Naive thymus-derived CD4-positive, alpha-beta T cell (primary cell): ENCODE measurements at regions of chr13 and their contacts with region 1.

Region 1: DNA sequence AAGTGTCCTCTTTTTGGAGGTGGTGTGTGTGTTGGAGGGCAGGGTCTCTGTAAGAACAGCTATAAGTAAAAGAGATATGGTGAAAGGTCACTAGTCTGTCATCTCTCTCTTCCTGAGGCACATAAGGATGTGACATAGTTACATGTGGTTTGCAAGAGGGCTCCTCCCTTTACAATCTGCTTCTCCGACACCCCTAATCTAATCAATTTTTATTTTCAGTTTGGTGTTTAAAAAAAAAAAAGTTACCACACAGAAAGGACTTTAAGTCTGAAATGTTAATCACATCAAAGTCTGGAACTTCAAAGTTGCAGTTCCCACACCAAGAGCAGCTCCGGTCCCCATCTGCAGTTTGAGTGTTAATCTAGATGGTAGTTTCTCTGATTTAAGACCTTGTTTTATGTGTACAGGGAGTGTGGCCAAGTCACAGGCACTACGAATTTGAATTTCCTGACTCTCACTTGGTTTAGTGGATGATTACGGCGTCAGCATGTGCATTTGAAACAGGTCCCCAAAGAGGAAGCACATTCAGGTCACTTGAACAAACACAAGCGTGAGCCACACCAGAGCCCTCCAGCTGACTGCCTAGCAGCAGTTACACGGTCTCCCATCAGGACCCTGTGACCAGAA is 53.1 kb downstream of the FOXO1 start:
- DNase-seq: peak in 8 of 9 donors; percentile 44 to 76 (median 64)
- ATAC-seq: peak; percentile 86
- H3K4me3 ChIP-seq: peak overlapping the region; percentile 26
- H3K4me3 Mint-ChIP-seq: peak overlapping the region; percentile 72 to 88 (median 82)
- H3K27ac ChIP-seq: peak overlapping the region; percentile 72
- H3K27ac Mint-ChIP-seq: peak overlapping the region; percentile 76 to 98 (median 92)
- H3K4me1 ChIP-seq: peaks cover 64 to 83% of the 10 kb centered on the region in 2 donors
- H3K4me1 Mint-ChIP-seq: peaks cover 59 to 100% (median 95%) of the 10 kb centered on the region in 7 donors
- H3K27me3 ChIP-seq: no peaks in the 10 kb centered on the region
- H3K27me3 Mint-ChIP-seq: no peaks in the 10 kb centered on the region

Region 2: GRCh38 chr13:40597740-40598370 is 15.4 kb before region 1 on chr13:
- CTCF ChIA-PET with region 1: no interaction called
- POLR2A ChIA-PET with region 1: interaction called, 4 read pairs
- intact Hi-C with region 1: loop called in 1 of 2 experiments (anchors 1 kb)
- DNase-seq: no peak
- ATAC-seq: no peak
- H3K4me3 ChIP-seq: no peak overlapping the region
- H3K4me3 Mint-ChIP-seq: peak overlapping the region; percentile 23 to 77 (median 64)
- H3K27ac ChIP-seq: no peak overlapping the region
- H3K27ac Mint-ChIP-seq: peak overlapping the region; percentile 54 to 90 (median 83)
- H3K4me1 ChIP-seq: peaks cover 43 to 92% of the 10 kb centered on the region in 2 donors
- H3K4me1 Mint-ChIP-seq: peaks cover 66 to 100% (median 93%) of the 10 kb centered on the region in 7 donors
- H3K27me3 ChIP-seq: no peaks in the 10 kb centered on the region
- H3K27me3 Mint-ChIP-seq: no peaks in the 10 kb centered on the region

Region 3: GRCh38 chr13:40624383-40624782 is 11.1 kb after region 1 on chr13:
- CTCF ChIA-PET with region 1: no interaction called
- POLR2A ChIA-PET with region 1: interaction called, 3 read pairs
- intact Hi-C with region 1: loop called in 1 of 2 experiments (anchors 1 kb)
- DNase-seq: peak in 1 of 9 donors; percentile 52
- ATAC-seq: peak; percentile 43
- H3K4me3 ChIP-seq: no peak overlapping the region
- H3K4me3 Mint-ChIP-seq: peak overlapping the region in 9 of 10 donors; percentile 39 to 74 (median 53)
- H3K27ac ChIP-seq: peak overlapping the region; percentile 37
- H3K27ac Mint-ChIP-seq: peak overlapping the region in 8 of 9 donors; percentile 33 to 88 (median 64)
- H3K4me1 ChIP-seq: peaks cover 25 to 61% of the 10 kb centered on the region in 2 donors
- H3K4me1 Mint-ChIP-seq: peaks cover 59 to 100% (median 92%) of the 10 kb centered on the region in 7 donors
- H3K27me3 ChIP-seq: no peaks in the 10 kb centered on the region
- H3K27me3 Mint-ChIP-seq: no peaks in the 10 kb centered on the region

Region 4: GRCh38 chr13:40629678-40630384 is 16.5 kb after region 1 on chr13:
- CTCF ChIA-PET with region 1: no interaction called
- POLR2A ChIA-PET with region 1: interaction called, 4 read pairs
- intact Hi-C with region 1: loop called (anchors 1 to 2 kb)
- DNase-seq: no peak
- ATAC-seq: no peak
- H3K4me3 ChIP-seq: no peak overlapping the region
- H3K4me3 Mint-ChIP-seq: peak overlapping the region in 9 of 10 donors; percentile 12 to 80 (median 44)
- H3K27ac ChIP-seq: peak overlapping the region; percentile 6
- H3K27ac Mint-ChIP-seq: peak overlapping the region; percentile 36 to 83 (median 79)
- H3K4me1 ChIP-seq: peaks cover 31 to 61% of the 10 kb centered on the region in 2 donors
- H3K4me1 Mint-ChIP-seq: peaks cover 45 to 100% (median 93%) of the 10 kb centered on the region in 7 donors
- H3K27me3 ChIP-seq: no peaks in the 10 kb centered on the region
- H3K27me3 Mint-ChIP-seq: no peaks in the 10 kb centered on the region

Region 5: DNA sequence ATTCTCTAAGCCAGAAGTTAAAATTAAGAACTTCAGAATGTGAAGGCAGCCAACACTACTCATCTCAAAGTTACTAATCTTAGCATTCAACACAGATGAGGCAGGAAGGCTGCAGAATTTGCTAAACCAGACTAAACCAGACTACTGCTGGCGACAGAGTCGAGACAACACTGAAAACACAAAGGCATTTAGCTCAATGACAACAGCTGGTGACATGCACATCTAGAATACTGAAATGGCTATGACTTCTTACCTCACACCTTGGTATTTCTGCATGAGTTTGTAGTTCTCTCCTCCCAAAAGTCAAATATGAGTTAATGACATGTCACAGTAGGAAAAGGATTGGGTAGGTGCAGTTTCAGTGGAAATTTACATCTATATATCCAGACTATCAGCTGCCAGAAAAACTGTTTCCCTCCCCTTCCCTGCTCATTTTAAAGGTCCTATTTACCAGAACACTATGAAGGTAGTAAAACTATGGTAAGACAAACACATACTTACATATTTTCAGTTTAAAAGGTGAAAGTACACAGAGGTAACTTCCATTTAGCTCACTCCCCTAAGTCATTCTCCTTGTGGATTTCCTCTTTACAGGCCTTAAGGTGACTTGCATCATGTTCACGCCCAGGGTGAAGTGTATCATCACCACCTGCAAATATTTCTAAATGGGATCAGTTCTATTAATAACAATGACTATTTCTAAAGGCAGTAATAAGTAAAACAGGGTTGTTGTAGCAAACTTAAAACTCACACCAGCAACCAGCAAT is 31.7 kb after region 1 on chr13:
- CTCF ChIA-PET with region 1: no interaction called
- POLR2A ChIA-PET with region 1: interaction called, 3 read pairs
- intact Hi-C with region 1: loop called in 1 of 2 experiments (anchors 5 kb)
- DNase-seq: peak in 3 of 9 donors; percentile 40 to 70 (median 45)
- ATAC-seq: peak; percentile 69
- H3K4me3 ChIP-seq: no peak overlapping the region
- H3K4me3 Mint-ChIP-seq: peak overlapping the region; percentile 51 to 98 (median 66)
- H3K27ac ChIP-seq: peak overlapping the region; percentile 25
- H3K27ac Mint-ChIP-seq: peak overlapping the region; percentile 52 to 83 (median 72)
- H3K4me1 ChIP-seq: peaks cover 34 to 87% of the 10 kb centered on the region in 2 donors
- H3K4me1 Mint-ChIP-seq: peaks cover 77 to 100% (median 95%) of the 10 kb centered on the region in 7 donors
- H3K27me3 ChIP-seq: no peaks in the 10 kb centered on the region
- H3K27me3 Mint-ChIP-seq: no peaks in the 10 kb centered on the region

Region 6: DNA sequence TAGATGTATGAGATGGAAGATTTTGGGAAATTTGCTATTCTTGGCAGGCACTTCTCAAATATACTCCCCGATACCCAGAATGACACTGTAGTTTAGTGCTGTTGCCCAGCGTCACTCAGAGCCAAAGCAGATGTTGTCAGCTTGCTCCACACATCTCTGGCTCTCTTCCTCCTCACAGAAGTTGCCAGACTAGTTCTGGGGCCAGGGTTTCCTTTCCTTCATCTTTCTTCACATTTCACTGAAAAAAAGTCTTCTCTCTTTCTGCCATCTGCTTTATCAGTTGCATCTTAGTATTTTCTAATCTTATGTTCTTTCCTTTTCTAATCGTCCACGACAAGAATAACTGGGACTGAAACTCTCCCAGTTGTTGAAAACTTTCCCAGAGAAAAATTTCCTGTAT is 1095.4 kb after region 1 on chr13:
- CTCF ChIA-PET with region 1: no interaction called
- POLR2A ChIA-PET with region 1: no interaction called
- intact Hi-C with region 1: no loop called
- DNase-seq: no peak
- ATAC-seq: no peak
- H3K4me3 ChIP-seq: no peak overlapping the region
- H3K4me3 Mint-ChIP-seq: no peak overlapping the region
- H3K27ac ChIP-seq: no peak overlapping the region
- H3K27ac Mint-ChIP-seq: no peak overlapping the region
- H3K4me1 ChIP-seq: no peaks in the 10 kb centered on the region
- H3K4me1 Mint-ChIP-seq: no peaks in the 10 kb centered on the region
- H3K27me3 ChIP-seq: no peaks in the 10 kb centered on the region
- H3K27me3 Mint-ChIP-seq: no peaks in the 10 kb centered on the region